Activated CD8-positive, alpha-beta T cell treated with anti-CD3 and anti-CD28 coated beads, Interleukin-2, amount 10 ng/mL, durations not matched to agents 7 days and 5 days (primary cell): ENCODE measurements at regions of chr1 and their contacts with region 1.

Region 1: GRCh38 chr1:160837558-160838205 is 25.0 kb downstream of the CD244 start:
- DNase-seq: peak; percentile 96
- ATAC-seq: peak; percentile 93
- H3K4me3 Mint-ChIP-seq: peak overlapping the region; percentile 73
- H3K27ac Mint-ChIP-seq: peak overlapping the region; percentile 97
- H3K4me1 Mint-ChIP-seq: peaks cover 77% of the 10 kb centered on the region
- H3K27me3 Mint-ChIP-seq: no peaks in the 10 kb centered on the region

Region 2: DNA sequence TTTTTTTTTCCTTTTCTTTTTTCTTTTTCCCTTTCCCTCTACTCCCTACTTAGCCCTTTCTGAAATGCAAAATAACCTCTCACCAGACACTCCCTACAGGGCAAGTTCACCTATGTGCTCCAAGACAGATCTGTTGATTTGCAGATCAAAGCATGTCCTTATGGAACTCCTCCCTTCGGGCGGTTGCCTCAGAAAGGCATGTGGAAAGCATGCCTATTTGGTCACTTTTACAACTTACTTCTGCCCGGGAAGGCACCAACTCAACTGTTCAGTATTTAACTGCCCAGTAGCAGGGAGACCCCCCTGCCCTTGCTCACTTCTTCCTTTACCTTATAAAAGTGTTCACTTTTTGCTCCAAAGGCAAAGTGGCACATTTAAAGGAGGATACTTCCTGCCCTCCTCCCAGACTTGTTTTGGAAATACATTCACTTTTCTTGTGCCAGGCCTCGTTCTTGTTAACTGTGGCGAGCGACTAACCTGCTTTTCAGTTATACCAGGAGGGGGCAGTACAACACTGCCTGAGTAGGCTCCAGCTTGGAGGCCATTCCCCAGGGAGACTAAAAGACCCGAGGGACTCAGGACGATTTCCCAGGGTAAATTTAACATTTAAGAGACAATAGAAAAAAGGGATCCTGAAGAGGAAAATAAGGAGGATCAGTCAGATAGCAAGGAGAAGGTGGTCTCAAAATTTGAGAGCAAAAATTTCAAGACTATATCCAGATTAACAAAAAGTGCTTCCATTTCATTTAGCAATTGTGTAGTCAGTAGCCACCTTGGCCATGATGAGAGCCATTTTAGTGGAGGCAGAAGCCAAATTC is 111.0 kb before region 1 on chr1:
- CTCF ChIA-PET with region 1: interaction called, 99 read pairs
- POLR2A ChIA-PET with region 1: no interaction called
- DNase-seq: peak; percentile 82
- ATAC-seq: peak; percentile 80
- H3K4me3 Mint-ChIP-seq: no peak overlapping the region
- H3K27ac Mint-ChIP-seq: no peak overlapping the region
- H3K4me1 Mint-ChIP-seq: peaks cover 25% of the 10 kb centered on the region
- H3K27me3 Mint-ChIP-seq: no peaks in the 10 kb centered on the region

Region 3: DNA sequence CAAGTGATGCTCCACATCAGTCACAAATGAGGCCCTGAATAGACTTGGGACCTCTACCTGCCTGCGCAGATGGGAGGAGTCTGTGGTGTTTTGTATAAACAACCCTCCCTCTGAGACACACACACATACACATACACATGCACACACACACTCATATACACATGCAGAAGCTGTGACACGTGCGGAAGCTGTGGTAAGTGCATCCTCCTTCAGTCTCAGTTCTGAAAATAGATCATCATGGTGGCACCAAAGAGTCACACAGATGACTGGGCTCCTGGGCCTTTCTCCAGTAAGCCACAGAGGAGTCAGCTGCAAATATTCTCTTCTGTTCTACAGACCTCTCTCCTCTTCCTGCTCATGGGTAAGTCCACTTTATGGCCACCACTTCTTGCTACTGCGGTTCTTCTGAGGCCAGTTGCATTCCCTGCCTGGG is 41.7 kb before region 1 on chr1 and contains the start of gene LY9:
- CTCF ChIA-PET with region 1: interaction called, 98 read pairs
- POLR2A ChIA-PET with region 1: no interaction called
- DNase-seq: peak; percentile 89
- ATAC-seq: peak; percentile 85
- H3K4me3 Mint-ChIP-seq: peak within 1 kb of the TSS; percentile 88
- H3K27ac Mint-ChIP-seq: peak within 1 kb of the TSS; percentile 95
- H3K4me1 Mint-ChIP-seq: peaks cover 62% of the 10 kb centered on the region
- H3K27me3 Mint-ChIP-seq: no peaks in the 10 kb centered on the region
- total RNA-seq, gene LY9: 24.7 to 24.9 TPM

Region 4: DNA sequence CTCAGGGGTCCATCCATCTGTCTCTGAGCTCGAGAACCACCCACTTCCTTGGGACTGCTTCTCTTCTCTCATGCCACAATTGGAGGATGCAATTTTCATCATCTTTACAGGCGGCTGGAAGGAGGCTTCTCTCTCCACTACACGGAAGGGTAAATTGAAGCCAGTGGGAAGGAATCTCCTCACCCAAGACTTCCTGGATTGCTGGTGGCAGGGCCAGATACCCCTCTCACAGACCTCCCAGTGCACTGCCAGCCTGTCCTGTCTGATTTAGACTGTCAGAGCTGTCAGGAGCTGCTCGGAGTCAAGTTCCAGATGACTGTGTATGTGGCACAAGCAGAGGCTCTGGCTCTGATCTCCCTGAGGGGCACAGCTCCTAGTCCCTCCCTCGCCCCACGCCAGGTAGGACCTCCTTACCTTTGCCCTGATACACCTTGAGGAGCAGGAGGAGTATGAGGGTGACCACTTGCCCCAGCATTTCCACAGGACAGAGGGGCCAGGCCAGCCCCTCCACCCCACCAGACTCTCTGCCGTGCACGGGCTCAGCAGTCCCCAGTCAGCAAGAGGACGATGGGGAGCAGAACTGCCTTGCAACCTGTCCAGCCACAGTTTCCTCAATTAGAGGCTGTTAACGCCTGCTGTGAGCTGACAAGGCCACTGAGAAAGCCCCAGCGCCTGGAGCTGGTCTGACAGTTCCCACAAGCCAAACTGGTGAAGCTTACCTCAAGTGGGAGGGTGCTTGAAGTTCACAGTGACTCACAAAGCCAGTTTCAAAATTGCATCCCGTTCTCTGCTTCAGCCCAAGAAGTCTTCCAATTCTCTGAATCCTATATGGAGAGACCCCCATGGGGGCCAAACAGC is 24.8 kb after region 1 on chr1 and contains the start of gene CD244:
- CTCF ChIA-PET with region 1: interaction called, 93 read pairs
- POLR2A ChIA-PET with region 1: interaction called, 20 read pairs
- DNase-seq: peak; percentile 82
- ATAC-seq: peak; percentile 90
- H3K4me3 Mint-ChIP-seq: peak within 1 kb of the TSS; percentile 78
- H3K27ac Mint-ChIP-seq: peak within 1 kb of the TSS; percentile 90
- H3K4me1 Mint-ChIP-seq: peaks cover 56% of the 10 kb centered on the region
- H3K27me3 Mint-ChIP-seq: no peaks in the 10 kb centered on the region
- total RNA-seq, gene CD244: 15.0 to 15.5 TPM

Region 5: DNA sequence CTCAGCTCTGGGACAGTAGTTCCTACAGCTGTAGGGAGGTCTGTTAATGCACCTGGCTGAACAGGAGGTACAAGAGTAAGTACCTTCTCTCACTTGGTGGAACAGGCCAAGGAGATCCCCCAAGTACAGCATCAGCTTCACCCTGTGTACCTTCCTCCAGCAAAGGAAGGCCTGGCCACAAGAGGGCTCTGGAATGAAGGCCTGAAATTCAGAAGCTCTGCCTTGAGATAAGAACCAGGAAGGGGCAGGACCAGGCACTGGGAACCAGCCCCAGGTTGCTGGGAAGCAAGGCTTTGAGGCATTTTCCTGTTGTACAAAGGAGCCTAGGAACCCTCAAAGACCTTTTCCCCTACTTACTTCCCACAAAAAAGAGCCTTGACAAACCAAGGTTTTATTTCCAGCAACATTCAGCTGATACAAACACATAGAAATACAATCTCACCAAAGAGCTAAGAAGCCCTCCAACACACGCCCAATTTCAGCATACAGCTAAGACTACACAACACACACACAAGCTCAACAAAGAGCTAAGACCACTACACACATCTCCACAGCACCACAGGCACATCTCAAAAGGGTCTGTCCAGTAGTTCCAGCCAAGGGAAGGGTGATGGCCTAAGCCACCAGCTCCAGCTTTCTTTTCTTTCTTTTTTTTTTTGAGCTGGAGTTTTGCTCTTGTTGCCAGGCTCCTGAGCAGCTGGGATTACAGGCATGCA is 159.8 kb after region 1 on chr1:
- CTCF ChIA-PET with region 1: interaction called, 19 read pairs
- POLR2A ChIA-PET with region 1: interaction called, 4 read pairs
- DNase-seq: peak; percentile 68
- ATAC-seq: peak; percentile 84
- H3K4me3 Mint-ChIP-seq: no peak overlapping the region
- H3K27ac Mint-ChIP-seq: no peak overlapping the region
- H3K4me1 Mint-ChIP-seq: no peaks in the 10 kb centered on the region
- H3K27me3 Mint-ChIP-seq: no peaks in the 10 kb centered on the region

Region 6: GRCh38 chr1:161054805-161055204 is 217.1 kb after region 1 on chr1:
- CTCF ChIA-PET with region 1: no interaction called
- POLR2A ChIA-PET with region 1: no interaction called
- DNase-seq: no peak
- ATAC-seq: no peak
- H3K4me3 Mint-ChIP-seq: no peak overlapping the region
- H3K27ac Mint-ChIP-seq: no peak overlapping the region
- H3K4me1 Mint-ChIP-seq: peaks cover 36% of the 10 kb centered on the region
- H3K27me3 Mint-ChIP-seq: no peaks in the 10 kb centered on the region